A673 (cell line): ENCODE measurements at regions of chr19 and their contacts with region 1.

Region 1: GRCh38 chr19:36132489-36132891 is 7.4 kb upstream of the CAPNS1 start:
- DNase-seq: no peak
- H3K4me3 ChIP-seq: no peak overlapping the region
- H3K27ac ChIP-seq: no peak overlapping the region
- H3K4me1 ChIP-seq: no peaks in the 10 kb centered on the region
- H3K27me3 ChIP-seq: no peaks in the 10 kb centered on the region
- CTCF ChIP-seq: no peak

Region 2: DNA sequence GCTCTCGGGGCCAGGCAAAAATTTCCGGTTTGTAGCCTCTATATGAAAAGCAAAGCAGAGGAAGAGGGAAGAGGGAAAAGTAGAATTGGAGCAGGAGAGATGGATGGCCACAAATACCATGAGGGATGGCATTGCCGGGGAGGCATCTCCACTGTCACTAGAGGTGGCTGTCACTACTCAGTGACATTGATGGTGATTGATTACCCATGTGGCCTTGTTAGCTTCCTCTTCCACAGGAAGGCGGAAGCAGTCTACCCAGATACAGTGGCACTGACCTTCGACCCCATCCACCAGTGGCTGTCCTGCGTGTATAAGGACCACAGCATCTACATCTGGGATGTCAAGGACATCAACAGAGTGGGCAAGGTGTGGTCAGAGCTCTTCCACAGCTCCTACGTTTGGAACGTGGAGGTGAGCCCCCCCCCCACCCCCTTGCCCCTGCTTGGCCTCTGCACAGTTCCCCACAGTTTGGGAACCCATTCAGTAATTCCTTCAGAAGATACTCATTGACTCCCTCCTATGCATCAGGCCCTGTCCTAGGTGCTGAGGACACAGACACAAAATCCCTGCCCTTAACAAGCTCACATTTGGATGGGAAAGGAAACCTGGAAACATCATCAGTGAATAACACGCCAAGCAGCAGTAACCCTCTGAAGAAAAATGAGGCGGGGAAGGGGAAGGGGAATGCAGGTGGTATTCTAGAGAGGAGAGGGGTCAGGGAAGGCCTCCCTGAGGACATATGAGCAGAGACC is 59.2 kb before region 1 on chr19:
- CTCF ChIA-PET with region 1: no interaction called
- POLR2A ChIA-PET with region 1: no interaction called
- intact Hi-C with region 1: no loop called
- DNase-seq: no peak
- H3K4me3 ChIP-seq: no peak overlapping the region
- H3K27ac ChIP-seq: no peak overlapping the region
- H3K4me1 ChIP-seq: no peaks in the 10 kb centered on the region
- H3K27me3 ChIP-seq: no peaks in the 10 kb centered on the region
- CTCF ChIP-seq: no peak

Region 3: GRCh38 chr19:36169084-36169760 is 36.7 kb after region 1 on chr19:
- CTCF ChIA-PET with region 1: interaction called, 21 read pairs
- POLR2A ChIA-PET with region 1: interaction called, 10 read pairs
- intact Hi-C with region 1: loop called (anchors 1 kb)
- DNase-seq: peak; percentile 91
- H3K4me3 ChIP-seq: no peak overlapping the region
- H3K27ac ChIP-seq: peak overlapping the region; percentile 68
- H3K4me1 ChIP-seq: peaks cover 13% of the 10 kb centered on the region
- H3K27me3 ChIP-seq: no peaks in the 10 kb centered on the region
- CTCF ChIP-seq: no peak

Region 4: DNA sequence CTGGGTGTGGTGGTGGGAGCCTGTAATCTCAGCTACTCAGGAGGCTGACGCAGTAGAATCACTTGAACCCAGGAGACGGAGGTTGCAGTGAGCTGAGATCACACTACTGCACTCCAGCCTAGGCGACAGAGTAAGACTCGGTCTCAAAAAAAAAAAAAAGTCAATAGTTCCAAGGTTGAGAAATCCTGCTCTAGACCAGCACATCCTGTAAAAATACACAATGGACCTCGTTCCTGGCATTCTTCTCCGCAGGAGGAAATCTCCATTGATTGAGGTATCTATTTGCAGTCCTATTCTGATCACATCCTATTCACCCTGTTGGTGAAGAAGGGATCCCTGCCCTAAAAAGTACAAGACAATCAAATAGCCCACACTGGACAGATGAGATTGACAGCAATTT is 231.4 kb after region 1 on chr19:
- CTCF ChIA-PET with region 1: no interaction called
- POLR2A ChIA-PET with region 1: no interaction called
- intact Hi-C with region 1: no loop called
- DNase-seq: no peak
- H3K4me3 ChIP-seq: no peak overlapping the region
- H3K27ac ChIP-seq: no peak overlapping the region
- H3K4me1 ChIP-seq: no peaks in the 10 kb centered on the region
- H3K27me3 ChIP-seq: no peaks in the 10 kb centered on the region
- CTCF ChIP-seq: no peak

Region 5: DNA sequence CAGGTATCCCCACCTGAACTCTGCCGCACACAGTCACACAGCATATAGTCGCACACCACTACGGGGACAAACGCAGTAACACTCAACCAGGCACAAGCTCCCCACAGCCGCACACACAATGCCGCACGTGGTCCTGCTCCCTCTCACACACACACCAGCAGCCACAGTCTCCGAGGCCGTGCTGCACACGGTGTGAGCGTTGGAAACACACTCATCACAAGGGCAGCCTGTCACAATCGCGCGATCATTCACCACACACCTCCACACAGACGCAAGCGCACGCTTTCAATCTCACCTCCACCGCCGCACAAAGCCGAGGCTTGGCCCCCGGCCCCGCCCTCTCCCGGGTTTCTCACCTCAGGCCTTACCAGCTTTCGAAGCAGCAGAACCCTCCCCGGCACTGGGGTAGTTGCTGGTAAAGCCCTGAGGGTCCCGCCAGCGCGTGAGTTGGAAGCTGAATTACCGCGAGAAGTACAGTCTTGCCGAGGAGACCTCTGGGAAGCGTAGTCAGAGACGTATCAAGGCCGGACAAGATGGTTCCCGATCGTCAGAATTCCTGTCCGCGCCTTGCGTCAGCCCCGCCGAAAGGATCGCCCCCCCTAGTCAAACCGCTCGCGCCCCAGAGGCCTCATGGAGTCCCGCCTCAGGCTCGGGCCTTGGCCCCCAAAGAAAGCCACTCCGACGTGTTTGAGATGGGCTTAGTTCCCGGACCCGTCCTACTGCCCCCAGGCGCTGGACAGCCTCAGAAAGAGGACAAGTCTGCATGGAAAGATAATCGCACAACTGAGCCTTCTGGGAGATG is 356.8 kb after region 1 on chr19 and contains the start of gene ZNF566:
- CTCF ChIA-PET with region 1: no interaction called
- POLR2A ChIA-PET with region 1: no interaction called
- intact Hi-C with region 1: loop called (anchors 2 kb)
- DNase-seq: peak; percentile 98
- H3K4me3 ChIP-seq: peak within 1 kb of the TSS; percentile 61
- H3K27ac ChIP-seq: peak within 1 kb of the TSS; percentile 97
- H3K4me1 ChIP-seq: peaks cover 3% of the 10 kb centered on the region
- H3K27me3 ChIP-seq: no peaks in the 10 kb centered on the region
- CTCF ChIP-seq: no peak
- total RNA-seq, gene ZNF566: 16.2 and 16.4 TPM in 2 replicates